ENCODE measurements at regions of chr18 and their contacts with region 1.

Region 1: DNA sequence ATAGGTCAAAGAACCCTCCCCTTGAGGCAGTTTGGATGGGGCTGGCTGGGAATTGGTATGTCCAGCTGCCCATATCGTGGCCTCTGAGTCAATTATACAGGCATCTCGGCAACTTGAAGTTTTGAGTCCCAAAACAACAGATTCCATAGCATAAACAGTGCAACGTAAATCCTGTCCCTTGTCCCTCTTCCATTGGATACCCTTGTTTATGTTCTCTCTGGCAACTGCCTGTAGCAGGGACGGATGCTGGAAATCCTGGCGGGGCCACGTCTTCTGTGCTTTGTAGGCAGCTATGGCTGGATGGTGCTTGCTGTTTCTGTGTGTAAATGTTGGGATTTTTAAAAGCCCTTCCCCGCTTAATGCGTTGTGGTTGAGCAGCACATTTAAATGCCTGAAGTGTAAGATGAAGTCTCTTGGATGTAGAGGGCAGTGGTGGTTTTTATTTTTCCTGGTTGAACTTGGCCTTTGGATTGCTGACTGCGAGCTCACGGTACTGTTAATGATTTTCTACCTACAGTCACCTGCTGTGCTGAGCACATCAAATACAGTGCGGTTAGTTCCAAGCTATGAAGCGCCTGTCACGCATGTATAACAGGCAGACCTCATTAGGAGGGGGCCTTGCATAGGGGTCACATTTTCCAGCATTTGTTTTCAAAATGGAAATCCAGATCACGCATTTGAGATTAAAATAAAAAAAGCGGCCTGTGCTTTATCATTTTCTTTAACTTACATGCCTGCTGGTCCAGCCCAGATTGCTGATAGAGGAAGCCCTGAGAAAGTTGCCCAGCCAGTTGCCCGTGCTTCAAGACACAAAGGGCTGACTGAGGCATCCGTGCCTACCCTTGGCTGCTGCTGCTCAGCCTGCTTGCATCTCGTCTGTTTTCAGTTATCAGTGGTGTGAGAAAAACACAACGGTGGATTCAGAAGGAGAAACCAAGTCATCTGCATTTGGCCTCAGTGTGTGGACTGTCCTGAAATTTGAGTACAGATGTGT is 84.7 kb downstream of the NEDD4L start:
- DNase-seq: no peak
- ATAC-seq: no peak
- H3K4me3 ChIP-seq: no peak overlapping the region
- H3K27ac ChIP-seq: no peak overlapping the region
- H3K4me1 ChIP-seq: no peaks in the 10 kb centered on the region
- H3K27me3 ChIP-seq: no peaks in the 10 kb centered on the region
- CTCF ChIP-seq: no peak

Region 2: GRCh38 chr18:57881818-57882413 is 246.8 kb before region 1 on chr18:
- intact Hi-C with region 1: loop called in 1 of 2 experiments (anchors 10 kb)
- DNase-seq: peak in 3 of 4 donors; percentile 51 to 89 (median 74)
- ATAC-seq: peak; percentile 100
- H3K4me3 ChIP-seq: no peak overlapping the region
- H3K27ac ChIP-seq: no peak overlapping the region
- H3K4me1 ChIP-seq: no peaks in the 10 kb centered on the region
- H3K27me3 ChIP-seq: no peaks in the 10 kb centered on the region
- CTCF ChIP-seq: peak; percentile 75 to 93

Region 3: GRCh38 chr18:58044380-58045241 is 84.1 kb before region 1 on chr18:
- intact Hi-C with region 1: loop called in 1 of 2 experiments (anchors 5 kb)
- DNase-seq: peak; percentile 59 to 84 (median 63)
- ATAC-seq: peak; percentile 17
- H3K4me3 ChIP-seq: peak overlapping the region; percentile 86 to 91
- H3K27ac ChIP-seq: peak overlapping the region; percentile 83 to 91
- H3K4me1 ChIP-seq: peaks cover 0 to 28% of the 10 kb centered on the region in 2 donors
- H3K27me3 ChIP-seq: peaks cover 0 to 39% of the 10 kb centered on the region in 2 donors
- CTCF ChIP-seq: peak in 1 of 2 donors; percentile 14

Region 4: DNA sequence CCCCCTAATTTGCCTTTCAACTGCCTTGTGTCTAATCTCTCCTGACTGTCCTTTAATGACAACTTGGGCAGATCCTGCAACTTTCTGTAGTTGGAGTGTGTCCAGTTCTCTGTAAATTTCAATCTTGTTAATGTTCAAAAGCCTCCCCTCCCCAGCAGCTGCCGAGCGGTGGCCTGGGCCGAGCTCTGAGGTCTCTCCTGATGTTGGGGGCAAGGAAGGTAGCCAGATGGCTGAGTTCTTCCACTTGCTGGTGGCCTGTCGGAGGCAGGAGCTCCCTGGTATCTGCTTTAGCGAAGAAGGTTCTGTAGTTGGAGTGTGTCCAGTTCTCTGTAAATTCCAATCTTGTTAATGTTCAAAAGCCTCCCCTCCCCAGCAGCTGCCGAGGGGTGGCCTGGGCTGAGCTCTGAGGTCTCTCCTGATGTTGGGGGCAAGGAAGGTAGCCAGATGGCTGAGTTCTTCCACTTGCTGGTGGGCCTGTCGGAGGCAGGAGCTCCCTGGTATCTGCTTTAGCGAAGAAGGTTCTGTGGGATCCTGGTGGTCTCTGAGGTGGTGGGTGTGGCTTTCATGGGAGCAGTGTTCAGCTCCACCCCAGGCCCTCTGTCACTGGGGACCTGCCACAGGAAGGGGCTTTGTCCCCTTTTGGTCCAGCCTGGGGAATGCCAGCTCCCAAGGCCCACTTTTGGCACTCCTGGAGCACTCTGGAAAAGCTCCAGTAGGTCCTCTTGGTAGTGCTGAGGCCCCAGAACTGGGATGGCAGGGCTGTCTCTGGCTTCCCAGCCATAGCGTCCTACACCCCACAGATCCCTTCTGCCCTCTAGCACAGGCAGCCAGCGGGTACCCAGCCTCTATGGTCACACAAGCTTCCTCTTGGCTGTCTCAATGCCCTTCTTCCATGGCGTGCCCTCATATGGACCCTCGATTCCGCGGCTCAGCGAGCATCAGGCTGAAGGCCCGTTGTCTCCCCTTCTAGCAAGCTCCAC is 288.3 kb after region 1 on chr18:
- intact Hi-C with region 1: no loop called
- DNase-seq: no peak
- ATAC-seq: no peak
- H3K4me3 ChIP-seq: no peak overlapping the region
- H3K27ac ChIP-seq: no peak overlapping the region
- H3K4me1 ChIP-seq: no peaks in the 10 kb centered on the region
- H3K27me3 ChIP-seq: no peaks in the 10 kb centered on the region
- CTCF ChIP-seq: no peak

Measured in left lung (tissue), 14 donors.